Naive thymus-derived CD4-positive, alpha-beta T cell (primary cell): ENCODE measurements at regions of chr12 and their contacts with region 1.

Region 1: GRCh38 chr12:48890657-48891418 is 25.2 kb upstream of the RND1 start:
- DNase-seq: peak; percentile 51 to 79 (median 64)
- ATAC-seq: peak; percentile 97
- H3K4me3 ChIP-seq: no peak overlapping the region
- H3K4me3 Mint-ChIP-seq: peak overlapping the region in 4 of 10 donors; percentile 2 to 39 (median 16)
- H3K27ac ChIP-seq: no peak overlapping the region
- H3K27ac Mint-ChIP-seq: peak overlapping the region in 1 of 9 donors; percentile 65
- H3K4me1 ChIP-seq: peaks cover 8% of the 10 kb centered on the region in 2 donors
- H3K4me1 Mint-ChIP-seq: peaks cover 0 to 10% (median 0%) of the 10 kb centered on the region in 7 donors
- H3K27me3 ChIP-seq: peaks cover 0 to 4% of the 10 kb centered on the region in 2 donors
- H3K27me3 Mint-ChIP-seq: peaks cover 12 to 30% (median 15%) of the 10 kb centered on the region in 5 donors

Region 2: GRCh38 chr12:48640854-48641253 is 250.0 kb before region 1 on chr12:
- CTCF ChIA-PET with region 1: no interaction called
- POLR2A ChIA-PET with region 1: no interaction called
- intact Hi-C with region 1: no loop called
- DNase-seq: no peak
- ATAC-seq: no peak
- H3K4me3 ChIP-seq: no peak overlapping the region
- H3K4me3 Mint-ChIP-seq: no peak overlapping the region
- H3K27ac ChIP-seq: no peak overlapping the region
- H3K27ac Mint-ChIP-seq: no peak overlapping the region
- H3K4me1 ChIP-seq: no peaks in the 10 kb centered on the region
- H3K4me1 Mint-ChIP-seq: peaks cover 0 to 7% (median 0%) of the 10 kb centered on the region in 7 donors
- H3K27me3 ChIP-seq: no peaks in the 10 kb centered on the region
- H3K27me3 Mint-ChIP-seq: no peaks in the 10 kb centered on the region

Region 3: DNA sequence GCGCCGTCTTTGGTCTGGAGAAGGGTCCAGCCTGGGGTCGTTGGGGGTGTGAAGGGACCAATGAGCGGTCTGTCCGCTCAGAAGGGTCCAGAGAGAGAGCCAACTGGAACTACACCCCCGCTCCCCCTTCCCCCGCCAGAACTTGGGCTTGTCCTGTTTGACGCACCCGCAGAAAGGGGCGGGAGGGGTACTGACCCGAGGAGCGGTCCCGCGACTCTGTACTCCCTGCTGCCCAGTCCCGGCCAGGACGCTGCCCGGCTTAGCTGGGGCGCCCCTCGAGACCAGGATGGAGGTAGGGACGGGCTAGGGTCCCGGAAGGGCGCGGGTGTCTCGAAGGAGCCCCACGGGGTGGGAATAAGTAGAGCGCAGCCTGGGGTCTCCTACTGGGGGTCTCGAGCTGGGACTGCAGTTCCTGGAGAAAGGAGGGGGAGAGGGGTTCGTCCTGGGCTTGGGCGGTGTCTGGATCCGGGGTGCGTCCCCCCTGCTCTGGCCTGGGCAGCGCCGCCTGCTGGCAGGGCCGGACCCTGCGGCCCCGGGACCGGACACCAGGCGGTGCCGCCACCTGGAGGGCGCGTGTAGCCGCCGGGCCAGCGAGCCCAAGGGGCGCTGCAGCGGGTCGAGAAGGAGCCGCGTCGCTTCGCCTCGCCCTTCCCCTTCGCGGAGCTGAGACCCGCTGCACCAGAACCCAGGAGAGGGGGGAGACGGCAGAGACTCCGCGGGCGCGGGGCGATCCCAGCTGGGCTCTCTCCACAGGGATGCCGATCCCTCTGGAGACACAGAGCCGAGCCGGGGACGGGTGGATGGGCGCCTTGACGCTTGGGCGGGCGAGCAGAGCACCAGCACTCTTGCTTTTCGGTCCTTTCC is 76.3 kb before region 1 on chr12:
- CTCF ChIA-PET with region 1: no interaction called
- POLR2A ChIA-PET with region 1: no interaction called
- intact Hi-C with region 1: loop called in 1 of 2 experiments (anchors 1 kb)
- DNase-seq: peak; percentile 18 to 93 (median 47)
- ATAC-seq: peak; percentile 86
- H3K4me3 ChIP-seq: peak overlapping the region; percentile 59
- H3K4me3 Mint-ChIP-seq: peak overlapping the region; percentile 58 to 95 (median 91)
- H3K27ac ChIP-seq: no peak overlapping the region
- H3K27ac Mint-ChIP-seq: peak overlapping the region in 4 of 9 donors; percentile 32 to 85 (median 66)
- H3K4me1 ChIP-seq: peaks cover 7 to 19% of the 10 kb centered on the region in 2 donors
- H3K4me1 Mint-ChIP-seq: peaks cover 18 to 39% (median 33%) of the 10 kb centered on the region in 7 donors
- H3K27me3 ChIP-seq: no peaks in the 10 kb centered on the region
- H3K27me3 Mint-ChIP-seq: peaks cover 0 to 23% (median 5%) of the 10 kb centered on the region in 5 donors

Region 4: GRCh38 chr12:48865434-48866290 is 25.2 kb before region 1 on chr12 and contains the start of gene RND1:
- CTCF ChIA-PET with region 1: interaction called, 12 read pairs
- POLR2A ChIA-PET with region 1: interaction called, 9 read pairs
- intact Hi-C with region 1: no loop called
- DNase-seq: peak; percentile 50 to 92 (median 82)
- ATAC-seq: peak; percentile 96
- H3K4me3 ChIP-seq: peak within 1 kb of the TSS; percentile 69
- H3K4me3 Mint-ChIP-seq: peak within 1 kb of the TSS; percentile 87 to 95 (median 94)
- H3K27ac ChIP-seq: peak within 1 kb of the TSS; percentile 62
- H3K27ac Mint-ChIP-seq: peak within 1 kb of the TSS; percentile 66 to 96 (median 85)
- H3K4me1 ChIP-seq: peaks cover 10 to 11% of the 10 kb centered on the region in 2 donors
- H3K4me1 Mint-ChIP-seq: peaks cover 15 to 28% (median 25%) of the 10 kb centered on the region in 7 donors
- H3K27me3 ChIP-seq: no peaks in the 10 kb centered on the region
- H3K27me3 Mint-ChIP-seq: peaks cover 23 to 40% (median 28%) of the 10 kb centered on the region in 5 donors
- total RNA-seq, gene RND1: 1.1 to 13.5 (median 2.3) TPM